ENCODE measurements at regions of chr18 and their contacts with region 1.

Region 1: GRCh38 chr18:10113121-10114022 is 199.6 kb downstream of the VAPA start:
- DNase-seq: peak; percentile 53 to 82 (median 79)
- H3K4me3 ChIP-seq: peak overlapping the region in 1 of 3 experiments; percentile 43
- H3K4me3 Mint-ChIP-seq: peak overlapping the region in 1 of 2 donors; percentile 67
- H3K27ac ChIP-seq: peak overlapping the region; percentile 36 to 80
- H3K27ac Mint-ChIP-seq: peak overlapping the region; percentile 83 to 97 (median 93)
- H3K4me1 ChIP-seq: peaks cover 67 to 70% of the 10 kb centered on the region in 2 donors
- H3K4me1 Mint-ChIP-seq: peaks cover 74% of the 10 kb centered on the region
- H3K27me3 ChIP-seq: no peaks in the 10 kb centered on the region
- H3K27me3 Mint-ChIP-seq: peaks cover 0 to 7% (median 0%) of the 10 kb centered on the region in 3 donors
- CTCF ChIP-seq: no peak

Region 2: GRCh38 chr18:10041180-10041579 is 72.2 kb before region 1 on chr18:
- intact Hi-C with region 1: loop called in 1 of 2 experiments (anchors 10 kb)
- DNase-seq: no peak
- H3K4me3 ChIP-seq: no peak overlapping the region
- H3K4me3 Mint-ChIP-seq: no peak overlapping the region
- H3K27ac ChIP-seq: no peak overlapping the region
- H3K27ac Mint-ChIP-seq: no peak overlapping the region
- H3K4me1 ChIP-seq: peaks cover 0 to 6% of the 10 kb centered on the region in 2 donors
- H3K4me1 Mint-ChIP-seq: peaks cover 9% of the 10 kb centered on the region
- H3K27me3 ChIP-seq: no peaks in the 10 kb centered on the region
- H3K27me3 Mint-ChIP-seq: peaks cover 0 to 8% (median 4%) of the 10 kb centered on the region in 3 donors
- CTCF ChIP-seq: no peak

Measured in CD14-positive monocyte (primary cell).